ENCODE measurements at regions of chr13 and their contacts with region 1.

Region 1: DNA sequence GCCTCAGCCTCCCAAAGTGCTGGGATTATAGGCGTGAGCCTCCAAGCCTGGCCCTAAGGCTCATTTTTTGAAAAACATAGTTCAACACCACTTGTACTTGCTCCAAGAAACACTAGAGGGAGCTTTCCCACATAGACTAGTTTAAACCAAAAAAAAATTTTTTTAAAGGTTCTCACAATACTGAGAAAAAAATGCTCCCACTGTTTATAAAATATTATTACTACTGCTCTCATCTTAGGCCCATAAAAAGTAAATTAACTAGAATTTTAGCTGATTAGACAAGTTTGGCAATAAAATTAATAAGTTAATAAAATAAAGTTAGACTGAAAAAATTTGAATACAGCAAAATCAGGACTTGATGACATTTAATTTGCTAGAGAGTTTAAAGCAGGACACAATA is 109.5 kb downstream of the TBC1D4 start:
- DNase-seq: peak in 2 of 4 donors; percentile 36 to 66
- ATAC-seq: peak; percentile 91
- H3K4me3 ChIP-seq: no peak overlapping the region
- H3K27ac ChIP-seq: no peak overlapping the region
- H3K4me1 ChIP-seq: peaks cover 0 to 7% of the 10 kb centered on the region in 2 donors
- H3K27me3 ChIP-seq: no peaks in the 10 kb centered on the region
- CTCF ChIP-seq: peak; percentile 63 to 67

Region 2: DNA sequence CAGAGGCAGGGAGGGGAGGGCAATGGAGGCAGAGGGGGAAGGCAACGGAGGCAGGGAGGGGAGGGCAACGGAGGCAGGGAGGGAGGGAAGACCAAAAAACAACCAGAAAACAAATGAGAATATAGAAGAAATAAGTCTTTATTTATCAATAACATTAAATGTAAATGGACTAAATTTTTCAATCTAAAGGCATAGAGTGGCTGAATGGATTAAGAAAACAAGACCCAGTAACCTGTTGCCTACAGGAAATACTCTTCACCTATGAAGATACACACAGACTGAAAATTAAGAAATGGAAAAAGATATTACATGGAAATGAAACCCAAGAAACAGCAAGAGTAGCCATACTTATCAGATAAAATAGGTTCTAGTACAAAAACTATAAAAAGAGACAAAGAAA is 426.9 kb before region 1 on chr13:
- intact Hi-C with region 1: no loop called
- DNase-seq: no peak
- ATAC-seq: no peak
- H3K4me3 ChIP-seq: no peak overlapping the region
- H3K27ac ChIP-seq: no peak overlapping the region
- H3K4me1 ChIP-seq: no peaks in the 10 kb centered on the region
- H3K27me3 ChIP-seq: no peaks in the 10 kb centered on the region
- CTCF ChIP-seq: no peak

Region 3: DNA sequence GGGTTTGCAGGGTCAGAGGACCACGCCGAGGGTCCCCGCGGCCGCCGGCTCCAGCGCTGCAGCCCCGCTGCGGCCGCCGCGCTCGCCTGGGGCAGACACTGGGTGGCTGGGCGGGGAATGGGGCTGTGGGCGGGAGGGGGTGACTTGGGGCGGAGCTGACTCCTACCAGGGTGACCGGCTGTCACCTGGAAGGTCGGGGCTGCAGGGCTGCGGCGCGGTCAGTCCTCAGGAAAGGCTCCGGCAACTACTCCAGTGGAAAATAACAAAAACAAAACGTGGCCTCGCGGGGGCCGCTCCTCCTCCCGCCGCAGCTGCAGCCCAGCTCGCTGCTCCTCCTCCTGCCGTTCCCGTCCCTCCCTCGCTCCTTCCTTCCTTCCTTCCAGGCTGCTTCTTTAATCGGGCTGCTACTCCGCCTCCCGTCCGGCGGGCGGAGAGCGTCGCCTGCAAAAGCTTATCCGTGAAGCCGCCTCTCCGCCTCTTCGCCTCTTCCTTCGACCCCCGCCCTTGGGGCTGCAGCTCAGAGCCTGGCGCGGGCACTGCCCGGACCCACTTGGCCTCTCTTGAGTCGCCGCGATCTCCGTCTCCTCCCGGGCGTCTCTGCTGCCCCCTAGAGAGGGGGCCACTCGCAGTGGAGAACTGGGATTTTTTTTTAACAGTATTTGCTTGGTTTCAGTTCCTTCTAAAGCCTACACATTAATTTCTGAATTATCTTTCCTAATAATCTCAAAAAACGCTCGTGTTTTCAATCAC is 109.7 kb after region 1 on chr13 and contains the start of gene TBC1D4:
- intact Hi-C with region 1: loop called in 1 of 2 experiments (anchors 10 kb)
- DNase-seq: peak; percentile 88 to 95 (median 90)
- ATAC-seq: peak; percentile 91
- H3K4me3 ChIP-seq: peak within 1 kb of the TSS; percentile 75 to 90
- H3K27ac ChIP-seq: peak within 1 kb of the TSS; percentile 74 to 82
- H3K4me1 ChIP-seq: peaks cover 3 to 19% of the 10 kb centered on the region in 2 donors
- H3K27me3 ChIP-seq: peaks cover 0 to 45% of the 10 kb centered on the region in 2 donors
- CTCF ChIP-seq: peak; percentile 64 to 78
- polyA plus RNA-seq, gene TBC1D4: 22.4 to 31.7 (median 27.8) TPM

Measured in left lung (tissue), 14 donors.